ENCODE measurements at regions of chr22 and their contacts with region 1.

Region 1: DNA sequence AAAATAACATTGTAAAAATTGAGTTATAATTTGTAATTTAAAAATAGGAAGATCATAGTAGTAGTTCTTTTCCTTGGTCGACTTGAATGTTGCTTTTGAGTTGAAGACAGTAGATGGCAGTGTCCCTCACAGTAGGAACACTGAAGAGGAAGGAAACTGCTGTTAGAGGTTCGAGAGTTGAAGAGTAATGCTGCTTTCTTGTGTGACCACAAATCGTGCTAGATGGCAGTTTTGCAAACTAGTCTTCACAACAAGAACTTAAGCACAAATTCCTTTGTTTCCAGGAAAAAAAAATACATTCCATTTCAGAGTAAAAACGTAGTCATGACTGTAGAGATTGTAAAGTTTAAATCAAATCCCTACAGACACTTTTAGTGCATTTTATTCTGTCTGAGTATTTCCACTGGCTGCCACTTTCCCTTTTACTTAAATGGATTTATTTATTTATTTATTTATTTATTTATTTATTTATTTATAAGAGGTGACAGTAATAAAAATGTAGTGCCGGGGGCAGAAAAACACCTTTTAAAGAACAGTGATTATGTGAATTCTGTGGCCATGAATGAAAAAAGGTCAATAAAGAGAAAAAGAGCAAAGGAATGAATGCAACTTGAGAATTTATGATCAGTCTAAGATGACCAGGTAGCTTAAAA is 54.6 kb downstream of the SPECC1L start:
- DNase-seq: peak; percentile 18
- H3K4me3 Mint-ChIP-seq: peak overlapping the region; percentile 39
- H3K27ac Mint-ChIP-seq: no peak overlapping the region
- H3K4me1 Mint-ChIP-seq: peaks cover 32% of the 10 kb centered on the region
- H3K27me3 Mint-ChIP-seq: no peaks in the 10 kb centered on the region

Region 2: DNA sequence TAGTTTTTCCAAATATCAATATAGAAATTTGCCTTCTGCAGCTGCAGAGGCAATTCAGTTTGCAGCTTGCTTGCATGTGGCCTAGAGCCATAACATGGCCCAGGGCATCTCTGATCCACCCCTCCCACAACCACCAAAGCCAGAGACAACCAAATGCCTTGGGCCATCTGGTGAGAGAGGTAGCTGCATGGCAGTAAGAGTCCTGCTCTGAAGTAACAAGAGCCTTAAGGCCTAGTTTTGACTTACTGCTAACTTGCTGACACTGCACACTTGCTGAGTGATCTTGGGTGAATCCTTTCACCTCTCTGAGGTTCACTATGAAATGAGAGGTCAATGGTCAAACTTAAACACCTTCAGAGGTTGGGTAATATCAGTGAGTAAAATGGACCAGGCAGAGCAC is 59.5 kb before region 1 on chr22:
- intact Hi-C with region 1: no loop called
- DNase-seq: no peak
- H3K4me3 Mint-ChIP-seq: no peak overlapping the region
- H3K27ac Mint-ChIP-seq: no peak overlapping the region
- H3K4me1 Mint-ChIP-seq: peaks cover 9% of the 10 kb centered on the region
- H3K27me3 Mint-ChIP-seq: no peaks in the 10 kb centered on the region

Region 3: GRCh38 chr22:24402460-24403192 is 77.4 kb after region 1 on chr22:
- intact Hi-C with region 1: loop called (anchors 5 kb)
- DNase-seq: no peak
- H3K4me3 Mint-ChIP-seq: no peak overlapping the region
- H3K27ac Mint-ChIP-seq: peak overlapping the region; percentile 36
- H3K4me1 Mint-ChIP-seq: peaks cover 51% of the 10 kb centered on the region
- H3K27me3 Mint-ChIP-seq: no peaks in the 10 kb centered on the region

Region 4: DNA sequence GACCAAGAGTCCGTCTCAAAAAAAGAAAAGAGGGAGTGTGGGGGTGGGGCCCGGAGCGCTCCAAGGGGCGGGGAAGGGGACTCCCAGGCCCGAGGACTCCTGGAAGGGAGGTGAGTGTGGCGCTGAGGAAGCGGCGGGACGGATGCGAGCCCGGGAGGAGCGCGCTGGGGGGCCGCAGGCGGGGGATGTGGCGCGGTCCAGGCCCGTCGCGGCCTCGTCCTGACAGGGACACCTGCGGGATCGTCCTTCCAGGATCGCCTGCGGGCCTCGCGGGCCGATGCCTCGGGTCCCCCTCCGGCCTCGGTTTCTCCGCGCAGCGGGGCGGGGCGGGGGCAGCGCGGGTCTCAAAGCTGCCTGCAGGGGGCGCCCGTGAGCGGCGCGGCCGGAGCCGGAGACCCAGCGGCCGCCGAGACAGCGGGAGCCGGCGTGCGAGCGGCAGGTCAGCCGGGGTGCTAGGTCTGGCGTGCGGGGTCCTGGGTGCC is 98.3 kb after region 1 on chr22:
- intact Hi-C with region 1: loop called (anchors 5 kb)
- DNase-seq: peak; percentile 50
- H3K4me3 Mint-ChIP-seq: peak overlapping the region; percentile 70
- H3K27ac Mint-ChIP-seq: no peak overlapping the region
- H3K4me1 Mint-ChIP-seq: peaks cover 33% of the 10 kb centered on the region
- H3K27me3 Mint-ChIP-seq: peaks cover 9% of the 10 kb centered on the region

Region 5: GRCh38 chr22:24503137-24503842 is 178.1 kb after region 1 on chr22:
- intact Hi-C with region 1: loop called (anchors 1 kb)
- DNase-seq: no peak
- H3K4me3 Mint-ChIP-seq: no peak overlapping the region
- H3K27ac Mint-ChIP-seq: no peak overlapping the region
- H3K4me1 Mint-ChIP-seq: peaks cover 17% of the 10 kb centered on the region
- H3K27me3 Mint-ChIP-seq: peaks cover 17% of the 10 kb centered on the region

Region 6: DNA sequence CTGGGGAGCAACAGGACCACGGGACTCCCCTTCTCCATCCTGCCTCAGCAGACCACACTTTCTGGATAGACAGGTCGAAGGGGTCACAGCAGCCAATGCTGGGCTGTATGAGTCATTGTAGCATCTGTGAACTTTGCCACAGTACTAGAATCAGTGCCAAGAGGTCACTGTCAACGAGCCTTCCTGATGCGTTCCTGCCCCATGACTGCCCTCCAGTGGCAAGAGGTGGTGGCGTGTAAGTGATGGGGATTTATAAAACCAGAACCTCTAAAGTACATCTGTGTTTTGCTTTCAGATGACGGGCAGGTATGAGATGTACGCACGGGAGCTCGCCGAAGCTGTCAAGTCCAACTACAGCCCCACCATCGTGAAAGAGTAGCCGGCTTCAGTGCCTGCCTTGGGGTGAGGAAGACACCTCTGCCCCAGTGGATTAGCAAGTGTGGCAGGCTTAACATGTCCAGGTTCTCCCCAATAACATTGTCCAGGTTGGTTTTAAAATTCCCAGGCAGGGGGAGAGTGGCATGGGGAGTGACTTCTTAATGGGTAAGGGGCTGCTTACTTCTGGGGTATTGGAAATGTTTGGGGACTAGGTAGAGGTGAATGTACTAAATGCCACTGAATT is 200.3 kb after region 1 on chr22:
- intact Hi-C with region 1: loop called (anchors 1 kb)
- DNase-seq: peak; percentile 76
- H3K4me3 Mint-ChIP-seq: no peak overlapping the region
- H3K27ac Mint-ChIP-seq: no peak overlapping the region
- H3K4me1 Mint-ChIP-seq: peaks cover 11% of the 10 kb centered on the region
- H3K27me3 Mint-ChIP-seq: peaks cover 4% of the 10 kb centered on the region